GM12878 (cell line): ENCODE measurements at regions of chr1 and their contacts with region 1.

Region 1: DNA sequence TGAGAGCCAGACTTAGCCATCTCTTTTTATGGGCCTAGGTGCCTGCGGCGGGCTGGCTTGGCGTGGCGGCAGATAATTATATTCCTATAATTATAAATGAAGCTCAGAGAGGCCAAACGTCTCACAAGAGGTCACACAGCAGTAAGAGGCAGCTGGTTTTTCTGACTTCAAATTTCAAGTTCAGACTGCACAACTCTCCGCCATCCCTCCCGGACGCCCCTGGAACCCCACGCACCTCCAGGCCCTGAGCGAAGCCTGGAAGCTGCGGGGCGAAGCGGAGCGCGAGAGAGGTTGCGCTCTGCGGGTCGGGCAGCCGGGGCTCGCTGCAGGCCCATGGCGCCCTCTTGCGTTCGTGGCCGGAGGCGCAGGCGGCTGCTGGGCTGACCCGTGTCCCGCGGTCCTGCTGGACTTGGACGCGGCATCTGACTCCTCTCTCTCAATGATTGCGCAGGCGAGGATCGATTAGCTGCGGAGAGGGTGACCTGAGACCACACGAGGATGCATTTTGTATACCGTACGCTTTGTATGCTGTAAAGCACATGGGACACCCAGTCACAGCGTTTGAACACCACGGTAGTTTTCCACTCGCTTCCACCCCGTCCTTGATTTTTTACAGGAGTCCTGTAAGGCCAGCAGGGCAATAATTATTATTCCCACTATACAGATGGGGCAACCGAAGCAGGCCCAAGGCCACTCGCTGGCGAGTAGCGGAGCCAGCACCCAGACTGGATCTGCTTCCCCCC is 272.7 kb downstream of the FOXD2 start:
- DNase-seq: no peak
- ATAC-seq: peak; percentile 95
- H3K4me3 ChIP-seq: no peak overlapping the region
- H3K27ac ChIP-seq: no peak overlapping the region
- H3K4me1 ChIP-seq: no peaks in the 10 kb centered on the region
- H3K27me3 ChIP-seq: peaks cover 13 to 18% of the 10 kb centered on the region in 2 experiments
- CTCF ChIP-seq: peak; percentile 93 to 96 (median 93)
- EP300 ChIP-seq: no peak
- POLR2A ChIP-seq: no peak
- RAD21 ChIP-seq: peak; percentile 87

Region 2: DNA sequence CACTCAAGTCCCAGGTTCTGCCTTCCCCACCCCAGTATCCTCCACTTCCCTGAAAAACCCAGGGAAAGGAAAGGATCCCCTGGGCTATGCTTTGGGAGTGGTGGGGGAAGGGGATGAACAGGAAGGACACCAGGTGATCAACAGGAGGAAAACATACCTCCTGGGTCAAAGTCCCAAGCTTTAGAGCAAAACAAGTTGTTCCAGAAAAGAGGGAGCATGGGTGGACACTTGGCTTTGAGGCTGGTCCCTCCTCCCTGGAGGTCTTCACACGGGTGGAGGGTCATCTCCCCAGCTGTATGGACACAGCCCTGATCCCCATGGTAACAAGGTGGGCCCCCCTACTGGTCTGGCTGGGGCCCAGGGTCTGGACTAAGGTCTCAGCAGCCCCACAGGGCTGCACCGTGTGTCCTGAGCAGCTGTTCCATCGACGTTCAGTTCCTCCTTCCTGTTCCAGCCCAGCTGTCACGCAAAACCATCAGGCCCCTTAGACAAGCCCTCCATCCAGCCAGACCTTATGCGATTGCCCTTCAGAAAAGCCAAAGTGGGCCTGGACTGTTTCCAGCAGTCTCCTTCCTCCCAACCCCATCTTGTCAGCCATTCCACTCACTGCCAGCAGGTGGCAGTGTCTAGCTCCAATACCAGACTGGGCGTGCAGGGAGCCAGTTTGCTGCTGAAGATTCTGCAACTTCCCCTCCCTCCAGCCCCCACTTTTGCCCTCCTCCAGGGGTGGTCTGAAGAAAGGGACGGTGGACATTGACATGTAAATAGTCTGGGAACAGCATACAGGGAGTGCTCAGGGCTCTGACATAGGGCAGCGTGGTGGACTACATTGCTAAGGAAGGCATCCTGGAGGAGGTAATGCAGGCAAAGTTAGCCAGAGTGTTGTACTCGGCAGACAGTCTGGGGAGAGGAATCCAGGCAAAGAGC is 517.8 kb before region 1 on chr1:
- CTCF ChIA-PET with region 1: interaction called, 4 read pairs
- POLR2A ChIA-PET with region 1: no interaction called
- RAD21 ChIA-PET with region 1: no interaction called
- SMC1A ChIA-PET with region 1: no interaction called
- in situ Hi-C with region 1: no loop called
- intact Hi-C with region 1: loop called (anchors 5 kb)
- DNase-seq: no peak
- ATAC-seq: peak; percentile 94
- H3K4me3 ChIP-seq: no peak overlapping the region
- H3K27ac ChIP-seq: no peak overlapping the region
- H3K4me1 ChIP-seq: no peaks in the 10 kb centered on the region
- H3K27me3 ChIP-seq: peaks cover 0 to 5% of the 10 kb centered on the region in 2 experiments; a peak in 1 of 4 replicates
- CTCF ChIP-seq: peak; percentile 86 to 96 (median 95)
- EP300 ChIP-seq: no peak
- POLR2A ChIP-seq: no peak
- RAD21 ChIP-seq: peak; percentile 80

Region 3: GRCh38 chr1:47388891-47389238 is 321.6 kb before region 1 on chr1:
- CTCF ChIA-PET with region 1: interaction called, 20 read pairs
- POLR2A ChIA-PET with region 1: no interaction called
- RAD21 ChIA-PET with region 1: interaction called, 3 read pairs
- SMC1A ChIA-PET with region 1: interaction called, 5 read pairs
- in situ Hi-C with region 1: loop called (anchors 5 kb)
- intact Hi-C with region 1: loop called (anchors 1 kb)
- DNase-seq: no peak
- ATAC-seq: peak; percentile 95
- H3K4me3 ChIP-seq: no peak overlapping the region
- H3K27ac ChIP-seq: no peak overlapping the region
- H3K4me1 ChIP-seq: no peaks in the 10 kb centered on the region
- H3K27me3 ChIP-seq: no peaks in the 10 kb centered on the region
- CTCF ChIP-seq: peak; percentile 76 to 89 (median 79)
- EP300 ChIP-seq: no peak
- POLR2A ChIP-seq: no peak
- RAD21 ChIP-seq: peak; percentile 67

Region 4: DNA sequence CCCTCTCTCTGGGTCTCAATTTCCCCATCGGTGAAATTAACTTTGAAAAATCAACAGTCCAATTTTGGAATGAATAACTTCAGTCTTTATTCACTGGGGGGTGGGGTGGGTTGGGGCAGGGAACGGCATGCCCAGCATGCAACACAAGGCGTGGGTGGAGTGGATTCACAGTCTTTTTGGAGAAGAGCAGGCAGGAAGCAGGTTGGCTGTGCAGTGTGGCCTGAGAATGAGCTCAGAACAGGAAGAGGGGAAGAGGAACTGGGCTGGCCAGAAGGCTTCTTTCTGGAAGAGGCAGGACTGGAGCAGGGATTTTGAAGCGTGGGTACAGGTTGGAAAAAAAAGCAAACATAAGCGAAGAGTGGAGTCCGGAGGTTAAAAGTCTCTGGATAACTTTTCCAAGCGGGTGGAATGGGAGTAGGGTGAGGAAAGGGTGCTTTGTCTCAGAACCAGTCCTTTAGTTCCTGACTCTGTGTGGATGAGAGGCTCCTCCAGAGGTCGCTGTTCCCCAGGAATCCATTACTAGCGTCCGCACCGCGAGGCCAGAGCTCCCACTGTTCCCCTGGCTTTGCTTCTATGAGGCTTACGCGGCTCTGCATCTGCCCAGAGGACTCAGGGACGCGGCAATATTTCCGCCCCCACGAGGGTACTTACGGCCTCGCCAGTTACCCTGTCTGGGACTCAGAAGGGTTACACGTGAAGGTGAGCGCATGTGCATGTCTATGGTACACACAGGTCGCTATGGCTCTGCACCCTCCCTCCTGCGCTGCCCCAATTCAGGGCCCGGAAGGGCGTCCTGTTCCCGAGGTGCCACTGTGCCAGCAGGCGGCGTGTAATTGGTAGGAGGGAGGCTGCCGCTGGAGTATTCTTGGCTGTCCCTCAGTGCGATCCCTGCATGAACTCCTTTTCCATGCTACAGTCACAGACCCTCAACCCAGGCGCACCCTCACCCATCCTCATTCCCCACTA is 278.1 kb before region 1 on chr1:
- CTCF ChIA-PET with region 1: interaction called, 18 read pairs
- POLR2A ChIA-PET with region 1: no interaction called
- RAD21 ChIA-PET with region 1: interaction called, 16 read pairs
- SMC1A ChIA-PET with region 1: interaction called, 4 read pairs
- in situ Hi-C with region 1: loop called (anchors 5 kb)
- intact Hi-C with region 1: loop called (anchors 1 kb)
- DNase-seq: peak; percentile 34
- ATAC-seq: peak; percentile 62
- H3K4me3 ChIP-seq: peak overlapping the region; percentile 54; the same call in 1 of the 2 replicates
- H3K27ac ChIP-seq: peak overlapping the region; percentile 38
- H3K4me1 ChIP-seq: peaks cover 23% of the 10 kb centered on the region
- H3K27me3 ChIP-seq: no peaks in the 10 kb centered on the region
- CTCF ChIP-seq: peak; percentile 77 to 81 (median 80)
- EP300 ChIP-seq: no peak
- POLR2A ChIP-seq: no peak
- RAD21 ChIP-seq: peak; percentile 54; the same call in 1 of the 2 replicates

Region 5: DNA sequence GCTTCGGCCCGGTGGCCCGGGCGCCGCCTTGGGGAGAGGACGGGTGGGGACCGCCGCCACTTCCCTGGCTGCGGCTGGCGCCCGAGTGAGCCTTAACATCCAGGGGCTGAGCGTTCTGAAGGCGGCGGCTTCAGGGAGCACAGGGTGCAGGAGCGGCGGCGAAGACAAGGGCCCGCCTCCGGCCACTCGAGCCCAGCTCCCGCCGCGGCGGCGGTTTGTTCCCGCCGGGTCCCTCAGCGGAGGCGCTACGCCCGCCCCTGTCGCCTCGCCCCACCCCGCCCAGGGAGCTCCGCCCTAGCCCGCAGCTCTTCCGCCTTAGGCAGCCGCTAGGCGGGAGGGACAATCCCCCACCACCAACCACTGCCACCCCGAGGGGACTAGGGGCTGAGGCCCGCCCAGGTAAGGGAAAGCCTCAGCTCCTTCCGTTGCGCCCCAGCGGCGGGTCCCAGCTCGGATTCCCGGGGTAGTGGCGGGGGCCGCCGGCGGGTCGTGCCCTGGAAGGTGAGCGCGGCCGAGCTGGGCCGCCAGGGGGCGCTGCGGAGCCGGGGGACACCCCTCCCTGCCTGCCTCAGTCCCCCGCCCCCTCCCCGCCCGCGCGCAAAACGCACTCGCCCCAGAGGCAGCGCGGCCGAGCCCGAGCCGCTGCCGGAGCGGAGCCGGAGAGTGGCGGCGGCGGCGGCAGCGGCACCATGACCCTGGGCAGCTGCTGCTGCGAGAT is 272.9 kb before region 1 on chr1 and contains the start of gene FOXD2:
- CTCF ChIA-PET with region 1: interaction called, 18 read pairs
- POLR2A ChIA-PET with region 1: interaction called, 4 read pairs
- RAD21 ChIA-PET with region 1: interaction called, 16 read pairs
- SMC1A ChIA-PET with region 1: interaction called, 4 read pairs
- in situ Hi-C with region 1: loop called (anchors 5 kb)
- intact Hi-C with region 1: loop called (anchors 1 kb)
- DNase-seq: peak; percentile 59
- ATAC-seq: peak; percentile 84
- H3K4me3 ChIP-seq: peak within 1 kb of the TSS; percentile 88
- H3K27ac ChIP-seq: peak within 1 kb of the TSS; percentile 64
- H3K4me1 ChIP-seq: peaks cover 8% of the 10 kb centered on the region
- H3K27me3 ChIP-seq: peaks cover 12 to 14% of the 10 kb centered on the region in 2 experiments
- CTCF ChIP-seq: peak; percentile 70 to 81 (median 75)
- EP300 ChIP-seq: no peak
- POLR2A ChIP-seq: peak; percentile 70
- RAD21 ChIP-seq: peak; percentile 21; the same call in 1 of the 2 replicates
- polyA plus RNA-seq, gene FOXD2: 0.04 TPM in 1 of 2 experiments, not detected in the other

Region 6: GRCh38 chr1:47527658-47528255 is 182.7 kb before region 1 on chr1:
- CTCF ChIA-PET with region 1: interaction called, 3 read pairs
- POLR2A ChIA-PET with region 1: no interaction called
- RAD21 ChIA-PET with region 1: no interaction called
- SMC1A ChIA-PET with region 1: no interaction called
- in situ Hi-C with region 1: no loop called
- intact Hi-C with region 1: loop called (anchors 10 kb)
- DNase-seq: no peak
- ATAC-seq: peak; percentile 42; the same call in 1 of the 3 replicates
- H3K4me3 ChIP-seq: no peak overlapping the region
- H3K27ac ChIP-seq: no peak overlapping the region
- H3K4me1 ChIP-seq: no peaks in the 10 kb centered on the region
- H3K27me3 ChIP-seq: peaks cover 0 to 3% of the 10 kb centered on the region in 2 experiments; a peak in 2 of 4 replicates
- CTCF ChIP-seq: peak; percentile 12 to 33 (median 26); a peak in 3 of 6 replicates
- EP300 ChIP-seq: no peak
- POLR2A ChIP-seq: no peak
- RAD21 ChIP-seq: 0 out of 2 replicates have a peak, but pooled peaks have one; percentile 7

Region 7: DNA sequence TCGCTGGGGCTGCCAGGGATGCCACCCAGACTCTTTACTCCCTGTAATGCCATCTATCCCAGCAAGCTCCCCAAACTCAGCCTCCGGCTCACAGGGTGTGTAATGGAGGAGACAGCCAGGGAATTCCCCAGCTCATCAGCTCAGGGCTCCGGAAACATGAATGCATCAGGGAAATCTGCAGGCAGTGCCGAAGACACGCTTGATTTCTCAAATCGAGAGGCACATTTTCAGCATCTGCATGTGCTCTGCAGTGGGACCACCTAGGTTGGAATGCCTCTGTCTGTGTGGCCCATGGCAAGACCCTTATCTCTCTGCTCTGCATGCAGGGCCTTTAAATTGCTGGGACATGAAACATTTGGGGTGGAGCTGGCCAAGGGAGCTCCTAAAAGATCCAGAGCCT is 116.6 kb after region 1 on chr1:
- CTCF ChIA-PET with region 1: no interaction called
- POLR2A ChIA-PET with region 1: no interaction called
- RAD21 ChIA-PET with region 1: no interaction called
- SMC1A ChIA-PET with region 1: no interaction called
- in situ Hi-C with region 1: no loop called
- intact Hi-C with region 1: no loop called
- DNase-seq: no peak
- ATAC-seq: no peak
- H3K4me3 ChIP-seq: no peak overlapping the region
- H3K27ac ChIP-seq: no peak overlapping the region
- H3K4me1 ChIP-seq: no peaks in the 10 kb centered on the region
- H3K27me3 ChIP-seq: peaks cover 0 to 6% of the 10 kb centered on the region in 2 experiments; a peak in 2 of 4 replicates
- CTCF ChIP-seq: no peak
- EP300 ChIP-seq: no peak
- POLR2A ChIP-seq: no peak
- RAD21 ChIP-seq: no peak

Region 8: GRCh38 chr1:48039088-48040054 is 328.9 kb after region 1 on chr1:
- CTCF ChIA-PET with region 1: no interaction called
- POLR2A ChIA-PET with region 1: no interaction called
- RAD21 ChIA-PET with region 1: no interaction called
- SMC1A ChIA-PET with region 1: no interaction called
- in situ Hi-C with region 1: no loop called
- intact Hi-C with region 1: no loop called
- DNase-seq: no peak
- ATAC-seq: peak; percentile 87
- H3K4me3 ChIP-seq: no peak overlapping the region
- H3K27ac ChIP-seq: no peak overlapping the region
- H3K4me1 ChIP-seq: no peaks in the 10 kb centered on the region
- H3K27me3 ChIP-seq: no peaks in the 10 kb centered on the region; a peak in 1 of 4 replicates
- CTCF ChIP-seq: no peak
- EP300 ChIP-seq: no peak
- POLR2A ChIP-seq: no peak
- RAD21 ChIP-seq: no peak